Aorta (tissue), 5 donors: ENCODE measurements at regions of chr4 and their contacts with region 1.

Region 1: DNA sequence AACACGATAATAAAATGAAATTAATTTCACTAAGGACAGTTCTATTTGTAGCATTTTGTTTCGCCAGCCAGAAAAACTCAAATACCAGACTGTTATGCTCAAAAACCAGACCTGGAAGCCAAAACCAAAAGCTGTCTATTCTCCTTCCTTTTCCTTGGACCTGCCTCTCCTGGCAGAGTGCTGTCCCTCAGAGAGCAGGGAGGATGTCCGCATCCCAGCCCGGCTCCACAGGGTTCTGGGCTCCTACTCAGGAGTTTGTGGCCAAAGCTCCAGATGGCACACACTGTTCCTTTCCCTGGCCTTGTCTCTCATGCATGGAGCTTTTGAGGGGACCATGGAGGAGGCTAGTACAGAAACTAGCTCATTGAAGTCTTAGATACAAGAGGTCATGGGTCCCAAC is 41.9 kb upstream of the C1QTNF7 start:
- DNase-seq: peak; percentile 66 to 77
- ATAC-seq: peak; percentile 83
- H3K4me3 ChIP-seq: no peak overlapping the region
- H3K27ac ChIP-seq: peak overlapping the region; percentile 30 to 62
- H3K4me1 ChIP-seq: peaks cover 6 to 19% of the 10 kb centered on the region in 2 donors
- H3K27me3 ChIP-seq: no peaks in the 10 kb centered on the region

Region 2: DNA sequence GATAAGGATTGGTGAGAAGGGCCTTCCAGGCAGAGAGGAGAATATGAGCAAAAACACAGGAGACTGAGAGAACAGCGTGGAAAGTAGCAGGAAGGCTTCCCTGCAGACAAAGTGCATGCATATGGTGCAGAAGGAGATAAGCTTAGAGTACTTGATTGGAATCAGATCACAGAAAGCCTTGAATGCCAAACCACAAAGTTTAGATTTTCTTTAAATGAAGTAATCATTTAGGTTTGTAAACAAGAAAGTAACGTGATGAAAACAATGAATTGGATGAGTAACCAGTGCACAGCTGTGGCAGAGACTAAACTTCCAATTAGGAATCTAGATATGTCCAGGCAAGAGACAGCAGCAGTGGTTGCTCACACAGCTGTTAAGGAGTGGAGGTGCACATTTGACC is 41.9 kb before region 1 on chr4:
- intact Hi-C with region 1: loop called in 1 of 2 experiments (anchors 5 kb)
- DNase-seq: no peak
- ATAC-seq: no peak
- H3K4me3 ChIP-seq: no peak overlapping the region
- H3K27ac ChIP-seq: no peak overlapping the region
- H3K4me1 ChIP-seq: peaks cover 7 to 17% of the 10 kb centered on the region in 2 donors
- H3K27me3 ChIP-seq: no peaks in the 10 kb centered on the region